ENCODE measurements at regions of chr4 and their contacts with region 1.

Region 1: DNA sequence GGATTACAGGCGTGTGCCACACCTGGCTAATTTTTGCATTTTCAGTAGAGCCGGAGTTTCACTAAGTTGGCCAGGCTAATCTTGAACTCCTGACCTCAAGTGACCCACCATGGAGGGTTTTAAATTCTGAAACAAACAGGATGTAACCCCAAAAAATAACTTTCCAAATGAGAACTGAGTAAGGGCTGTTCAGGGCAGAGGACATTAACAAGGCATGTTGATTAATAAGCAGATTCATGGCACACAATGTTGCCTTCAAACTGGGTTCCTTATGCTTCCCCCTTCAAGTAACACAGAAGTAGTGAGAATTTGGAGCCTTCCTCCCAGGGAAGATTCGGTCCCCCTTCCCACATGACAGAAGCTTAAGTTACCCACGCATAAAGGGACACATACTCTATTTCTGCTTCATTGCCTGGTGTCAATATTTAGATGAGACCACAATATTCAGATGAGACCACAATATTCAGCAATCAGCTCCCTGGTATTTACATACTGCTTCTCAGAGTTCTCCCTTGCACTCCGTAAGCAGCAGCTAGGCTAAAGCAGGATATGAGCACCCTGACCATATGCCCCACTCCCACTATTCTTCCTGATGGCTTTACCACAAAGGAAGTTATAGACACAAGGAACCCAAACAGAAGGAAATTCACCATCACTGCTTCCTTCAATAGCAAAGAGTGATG is 21.4 kb downstream of the GRSF1 start:
- DNase-seq: no peak
- H3K4me3 ChIP-seq: no peak overlapping the region
- H3K27ac ChIP-seq: no peak overlapping the region
- H3K4me1 ChIP-seq: no peaks in the 10 kb centered on the region
- H3K27me3 ChIP-seq: no peaks in the 10 kb centered on the region
- CTCF ChIP-seq: no peak
- POLR2A ChIP-seq: no peak

Region 2: DNA sequence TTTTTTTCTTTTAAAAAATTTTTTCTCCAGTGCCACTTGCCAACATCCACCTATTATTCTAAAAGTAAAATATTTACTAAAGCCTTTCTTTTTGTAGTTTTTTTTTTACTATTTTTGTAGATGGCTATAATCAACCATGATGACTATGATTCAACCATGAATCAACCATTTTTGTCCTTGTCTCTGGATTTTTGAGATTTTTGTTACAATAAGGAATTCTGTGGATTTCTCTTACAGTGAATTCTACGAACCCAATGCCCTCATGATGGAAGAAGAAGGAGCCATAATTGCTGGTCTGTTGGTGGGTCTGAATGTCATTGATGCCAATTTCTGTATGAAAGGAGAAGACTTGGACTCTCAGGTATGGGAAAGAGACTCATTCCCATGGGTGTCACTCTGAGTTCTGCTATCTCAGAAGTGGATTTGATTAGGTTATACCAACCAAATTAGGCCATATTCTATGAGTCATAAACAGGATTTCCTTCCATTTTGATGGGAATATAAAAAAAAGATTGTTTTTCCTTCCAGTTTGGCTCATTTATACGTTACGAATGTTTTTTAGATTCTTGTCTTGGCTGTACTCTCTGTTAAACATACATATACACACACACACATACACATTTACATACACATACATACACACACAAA is 49.9 kb before region 1 on chr4:
- intact Hi-C with region 1: loop called (anchors 2 kb)
- DNase-seq: no peak
- H3K4me3 ChIP-seq: no peak overlapping the region
- H3K27ac ChIP-seq: no peak overlapping the region
- H3K4me1 ChIP-seq: no peaks in the 10 kb centered on the region
- H3K27me3 ChIP-seq: no peaks in the 10 kb centered on the region
- CTCF ChIP-seq: no peak
- POLR2A ChIP-seq: no peak

Region 3: GRCh38 chr4:71501992-71502391 is 683.7 kb after region 1 on chr4:
- intact Hi-C with region 1: loop called (anchors 5 kb)
- DNase-seq: no peak
- H3K4me3 ChIP-seq: no peak overlapping the region
- H3K27ac ChIP-seq: no peak overlapping the region
- H3K4me1 ChIP-seq: no peaks in the 10 kb centered on the region
- H3K27me3 ChIP-seq: no peaks in the 10 kb centered on the region
- CTCF ChIP-seq: no peak
- POLR2A ChIP-seq: no peak

Measured in breast epithelium (tissue), 4 donors.